Caco-2 (cell line): ENCODE measurements at regions of chr5 and their contacts with region 1.

Region 1: GRCh38 chr5:143594913-143595841 is 191.7 kb upstream of the NR3C1 start:
- DNase-seq: peak; percentile 41 to 46
- H3K4me3 ChIP-seq: no peak overlapping the region
- H3K4me3 Mint-ChIP-seq: peak overlapping the region; percentile 37
- H3K27ac Mint-ChIP-seq: peak overlapping the region; percentile 89
- H3K4me1 ChIP-seq: peaks cover 59% of the 10 kb centered on the region
- H3K4me1 Mint-ChIP-seq: peaks cover 40% of the 10 kb centered on the region
- H3K27me3 ChIP-seq: no peaks in the 10 kb centered on the region
- H3K27me3 Mint-ChIP-seq: no peaks in the 10 kb centered on the region
- CTCF ChIP-seq: no peak

Region 2: DNA sequence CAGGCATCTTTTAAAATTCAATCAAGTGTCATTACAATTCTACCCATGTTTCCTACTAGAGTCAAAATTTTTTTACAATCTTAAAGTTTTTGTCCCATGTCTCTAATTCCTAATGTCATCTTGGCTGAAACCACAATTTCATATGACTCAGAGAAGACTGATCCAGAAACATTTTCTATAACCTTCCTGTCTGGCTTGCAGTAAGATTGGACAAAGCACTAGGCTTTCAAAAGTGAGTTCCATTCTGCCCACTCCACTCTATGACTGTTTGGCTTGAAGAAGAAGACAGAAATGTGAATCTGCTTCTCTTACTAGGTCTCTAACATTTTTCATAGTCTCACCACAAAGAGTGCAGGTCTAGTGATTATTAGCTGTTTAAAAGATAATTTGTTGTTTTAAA is 280.5 kb before region 1 on chr5:
- CTCF ChIA-PET with region 1: no interaction called
- POLR2A ChIA-PET with region 1: no interaction called
- intact Hi-C with region 1: no loop called
- DNase-seq: no peak
- H3K4me3 ChIP-seq: no peak overlapping the region
- H3K4me3 Mint-ChIP-seq: no peak overlapping the region
- H3K27ac Mint-ChIP-seq: no peak overlapping the region
- H3K4me1 ChIP-seq: peaks cover 8% of the 10 kb centered on the region; the same call in 1 of the 2 replicates
- H3K4me1 Mint-ChIP-seq: no peaks in the 10 kb centered on the region
- H3K27me3 ChIP-seq: no peaks in the 10 kb centered on the region
- H3K27me3 Mint-ChIP-seq: no peaks in the 10 kb centered on the region
- CTCF ChIP-seq: no peak

Region 3: GRCh38 chr5:143403593-143404415 is 191.4 kb before region 1 on chr5 and contains the start of gene NR3C1:
- CTCF ChIA-PET with region 1: no interaction called
- POLR2A ChIA-PET with region 1: no interaction called
- intact Hi-C with region 1: loop called (anchors 5 kb)
- DNase-seq: peak; percentile 57 to 78
- H3K4me3 ChIP-seq: peak within 1 kb of the TSS; percentile 90
- H3K4me3 Mint-ChIP-seq: peak within 1 kb of the TSS; percentile 77
- H3K27ac Mint-ChIP-seq: peak within 1 kb of the TSS; percentile 15
- H3K4me1 ChIP-seq: no peaks in the 10 kb centered on the region
- H3K4me1 Mint-ChIP-seq: peaks cover 13% of the 10 kb centered on the region
- H3K27me3 ChIP-seq: no peaks in the 10 kb centered on the region; the same call in 1 of the 2 replicates
- H3K27me3 Mint-ChIP-seq: no peaks in the 10 kb centered on the region
- CTCF ChIP-seq: peak; percentile 36 to 57
- total RNA-seq, gene NR3C1: 15.4 and 17.5 TPM in 2 replicates

Region 4: DNA sequence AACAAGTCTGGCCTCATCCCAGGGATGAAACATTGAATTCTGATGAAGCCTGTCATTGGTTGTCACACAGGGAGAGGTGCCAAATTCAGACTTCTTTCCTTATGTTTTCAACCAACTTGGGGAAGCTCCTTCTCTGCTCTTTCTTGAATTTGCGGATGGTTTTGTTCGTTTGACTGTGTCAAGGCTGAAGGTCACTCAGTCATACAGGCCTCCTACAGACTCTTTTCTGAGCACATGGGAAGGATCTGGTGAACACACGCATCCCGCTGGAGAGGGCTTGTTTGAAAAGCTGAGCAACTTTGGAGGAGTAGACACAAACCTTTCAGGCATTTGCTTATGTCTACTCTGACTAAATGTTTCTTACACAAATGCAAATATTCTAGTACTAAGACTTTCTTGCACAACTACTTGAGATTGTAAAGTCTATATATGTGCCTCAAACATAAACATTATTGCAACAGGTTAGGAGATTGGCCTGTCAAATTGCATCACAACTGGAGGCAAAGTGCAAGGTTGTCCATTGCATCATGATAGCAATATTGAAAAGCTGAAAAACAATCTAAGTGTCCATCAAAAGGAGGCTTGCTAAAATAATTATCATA is 40.2 kb before region 1 on chr5:
- CTCF ChIA-PET with region 1: no interaction called
- POLR2A ChIA-PET with region 1: no interaction called
- intact Hi-C with region 1: loop called (anchors 1 kb)
- DNase-seq: peak; percentile 53 to 64
- H3K4me3 ChIP-seq: no peak overlapping the region
- H3K4me3 Mint-ChIP-seq: no peak overlapping the region
- H3K27ac Mint-ChIP-seq: peak overlapping the region; percentile 79
- H3K4me1 ChIP-seq: peaks cover 15% of the 10 kb centered on the region
- H3K4me1 Mint-ChIP-seq: peaks cover 20% of the 10 kb centered on the region
- H3K27me3 ChIP-seq: no peaks in the 10 kb centered on the region
- H3K27me3 Mint-ChIP-seq: no peaks in the 10 kb centered on the region
- CTCF ChIP-seq: no peak

Region 5: DNA sequence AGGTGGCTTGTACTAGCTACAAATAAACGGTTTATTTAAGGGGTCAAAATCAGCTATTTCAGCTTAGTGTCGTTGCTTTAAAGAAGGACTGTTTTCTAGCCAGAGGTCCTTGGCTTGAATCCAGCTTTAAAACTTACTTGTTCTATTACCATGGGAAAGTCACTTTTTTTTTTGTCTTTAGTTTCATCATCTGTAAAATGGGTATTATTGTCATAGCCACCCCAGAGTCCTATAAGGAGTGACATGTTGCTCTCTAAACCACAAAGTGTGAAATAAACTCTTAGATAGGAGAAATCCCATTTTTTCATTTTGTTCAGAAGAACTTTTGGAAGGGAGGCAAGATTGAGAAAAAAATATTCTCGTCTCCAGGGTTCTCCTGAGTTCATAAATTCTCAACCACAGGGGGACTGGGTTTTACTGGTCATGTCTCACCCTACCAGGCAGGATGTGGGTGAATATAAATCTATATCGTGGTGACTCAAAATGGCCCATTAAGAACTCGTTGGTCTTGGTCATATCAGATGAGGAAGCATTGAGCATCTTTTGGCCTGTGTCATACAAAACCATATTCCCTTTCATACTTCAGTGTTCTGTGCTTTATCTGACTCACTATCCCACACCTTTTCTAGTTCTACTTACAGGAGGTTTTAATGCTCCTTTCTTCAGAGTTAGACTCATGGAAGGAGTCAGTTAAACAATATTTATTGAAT is 11.0 kb after region 1 on chr5:
- CTCF ChIA-PET with region 1: no interaction called
- POLR2A ChIA-PET with region 1: no interaction called
- intact Hi-C with region 1: no loop called
- DNase-seq: no peak
- H3K4me3 ChIP-seq: no peak overlapping the region
- H3K4me3 Mint-ChIP-seq: no peak overlapping the region
- H3K27ac Mint-ChIP-seq: no peak overlapping the region
- H3K4me1 ChIP-seq: peaks cover 32% of the 10 kb centered on the region
- H3K4me1 Mint-ChIP-seq: peaks cover 18% of the 10 kb centered on the region
- H3K27me3 ChIP-seq: no peaks in the 10 kb centered on the region
- H3K27me3 Mint-ChIP-seq: no peaks in the 10 kb centered on the region
- CTCF ChIP-seq: no peak

Region 6: GRCh38 chr5:143629871-143630659 is 34.9 kb after region 1 on chr5:
- CTCF ChIA-PET with region 1: no interaction called
- POLR2A ChIA-PET with region 1: no interaction called
- intact Hi-C with region 1: loop called (anchors 2 kb)
- DNase-seq: peak in 1 of 2 experiments; percentile 7
- H3K4me3 ChIP-seq: no peak overlapping the region
- H3K4me3 Mint-ChIP-seq: no peak overlapping the region
- H3K27ac Mint-ChIP-seq: peak overlapping the region; percentile 70
- H3K4me1 ChIP-seq: peaks cover 27% of the 10 kb centered on the region
- H3K4me1 Mint-ChIP-seq: peaks cover 30% of the 10 kb centered on the region
- H3K27me3 ChIP-seq: no peaks in the 10 kb centered on the region
- H3K27me3 Mint-ChIP-seq: no peaks in the 10 kb centered on the region
- CTCF ChIP-seq: no peak

Region 7: GRCh38 chr5:143659718-143660152 is 64.6 kb after region 1 on chr5:
- CTCF ChIA-PET with region 1: no interaction called
- POLR2A ChIA-PET with region 1: no interaction called
- intact Hi-C with region 1: loop called (anchors 1 kb)
- DNase-seq: peak; percentile 40 to 73
- H3K4me3 ChIP-seq: no peak overlapping the region
- H3K4me3 Mint-ChIP-seq: peak overlapping the region; percentile 30
- H3K27ac Mint-ChIP-seq: peak overlapping the region; percentile 88
- H3K4me1 ChIP-seq: peaks cover 32% of the 10 kb centered on the region
- H3K4me1 Mint-ChIP-seq: peaks cover 17% of the 10 kb centered on the region
- H3K27me3 ChIP-seq: no peaks in the 10 kb centered on the region
- H3K27me3 Mint-ChIP-seq: no peaks in the 10 kb centered on the region
- CTCF ChIP-seq: no peak

Region 8: GRCh38 chr5:143679777-143680176 is 84.6 kb after region 1 on chr5:
- CTCF ChIA-PET with region 1: no interaction called
- POLR2A ChIA-PET with region 1: interaction called, 4 read pairs
- intact Hi-C with region 1: loop called (anchors 2 kb)
- DNase-seq: no peak
- H3K4me3 ChIP-seq: no peak overlapping the region
- H3K4me3 Mint-ChIP-seq: no peak overlapping the region
- H3K27ac Mint-ChIP-seq: peak overlapping the region; percentile 17
- H3K4me1 ChIP-seq: peaks cover 46% of the 10 kb centered on the region
- H3K4me1 Mint-ChIP-seq: peaks cover 34% of the 10 kb centered on the region
- H3K27me3 ChIP-seq: no peaks in the 10 kb centered on the region
- H3K27me3 Mint-ChIP-seq: no peaks in the 10 kb centered on the region
- CTCF ChIP-seq: no peak